AG04449 (cell line): ENCODE measurements at regions of chr6 and their contacts with region 1.

Region 1: GRCh38 chr6:12289933-12290820 is at the start of gene EDN1:
- DNase-seq: no peak
- H3K4me3 ChIP-seq: peak within 1 kb of the TSS; percentile 62
- CTCF ChIP-seq: peak; percentile 70

Region 2: GRCh38 chr6:11585426-11586016 is 704.7 kb before region 1 on chr6:
- CTCF ChIA-PET with region 1: interaction called, 59 read pairs
- POLR2A ChIA-PET with region 1: interaction called, 3 read pairs
- DNase-seq: no peak
- H3K4me3 ChIP-seq: no peak overlapping the region
- CTCF ChIP-seq: peak; percentile 50

Region 3: GRCh38 chr6:12233693-12234571 is 56.2 kb before region 1 on chr6:
- CTCF ChIA-PET with region 1: interaction called, 11 read pairs
- POLR2A ChIA-PET with region 1: no interaction called
- DNase-seq: peak; percentile 46
- H3K4me3 ChIP-seq: no peak overlapping the region
- CTCF ChIP-seq: peak; percentile 60

Region 4: GRCh38 chr6:12245763-12246718 is 44.1 kb before region 1 on chr6:
- CTCF ChIA-PET with region 1: interaction called, 10 read pairs
- POLR2A ChIA-PET with region 1: no interaction called
- DNase-seq: no peak
- H3K4me3 ChIP-seq: no peak overlapping the region
- CTCF ChIP-seq: no peak

Region 5: GRCh38 chr6:12313992-12314805 is 24.0 kb after region 1 on chr6:
- CTCF ChIA-PET with region 1: interaction called, 44 read pairs
- POLR2A ChIA-PET with region 1: no interaction called
- DNase-seq: no peak
- H3K4me3 ChIP-seq: no peak overlapping the region
- CTCF ChIP-seq: no peak

Region 6: DNA sequence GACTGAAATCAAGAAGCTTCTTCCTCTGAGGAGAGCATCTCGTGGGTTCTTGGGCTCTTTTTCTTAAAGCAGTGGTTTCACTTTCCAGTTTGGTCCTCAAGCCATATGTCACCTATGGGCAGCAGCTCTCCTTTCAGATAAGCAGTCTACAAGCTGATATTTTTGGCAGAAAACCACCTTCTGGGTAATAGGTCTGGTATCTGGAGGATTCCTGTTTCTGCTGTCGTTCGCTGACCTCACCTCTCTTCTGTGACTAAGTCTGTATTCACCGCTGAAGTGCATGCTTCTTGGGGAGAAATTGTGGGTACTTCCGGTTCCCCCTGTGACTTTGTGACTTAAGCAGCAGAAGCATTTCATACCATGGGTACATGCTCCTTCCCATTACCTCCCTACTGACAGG is 193.5 kb after region 1 on chr6:
- CTCF ChIA-PET with region 1: interaction called, 22 read pairs
- POLR2A ChIA-PET with region 1: interaction called, 3 read pairs
- DNase-seq: peak; percentile 93
- H3K4me3 ChIP-seq: peak overlapping the region; percentile 24
- CTCF ChIP-seq: no peak

Region 7: GRCh38 chr6:12595161-12595811 is 305.1 kb after region 1 on chr6:
- CTCF ChIA-PET with region 1: interaction called, 281 read pairs
- POLR2A ChIA-PET with region 1: no interaction called
- DNase-seq: no peak
- H3K4me3 ChIP-seq: no peak overlapping the region
- CTCF ChIP-seq: no peak